Activated CD4-positive, alpha-beta T cell treated with anti-CD3 and anti-CD28 coated beads, Interleukin-2, amount 10 ng/mL, durations not matched to agents 7 days and 5 days (primary cell): ENCODE measurements at regions of chr10 and their contacts with region 1.

Region 1: DNA sequence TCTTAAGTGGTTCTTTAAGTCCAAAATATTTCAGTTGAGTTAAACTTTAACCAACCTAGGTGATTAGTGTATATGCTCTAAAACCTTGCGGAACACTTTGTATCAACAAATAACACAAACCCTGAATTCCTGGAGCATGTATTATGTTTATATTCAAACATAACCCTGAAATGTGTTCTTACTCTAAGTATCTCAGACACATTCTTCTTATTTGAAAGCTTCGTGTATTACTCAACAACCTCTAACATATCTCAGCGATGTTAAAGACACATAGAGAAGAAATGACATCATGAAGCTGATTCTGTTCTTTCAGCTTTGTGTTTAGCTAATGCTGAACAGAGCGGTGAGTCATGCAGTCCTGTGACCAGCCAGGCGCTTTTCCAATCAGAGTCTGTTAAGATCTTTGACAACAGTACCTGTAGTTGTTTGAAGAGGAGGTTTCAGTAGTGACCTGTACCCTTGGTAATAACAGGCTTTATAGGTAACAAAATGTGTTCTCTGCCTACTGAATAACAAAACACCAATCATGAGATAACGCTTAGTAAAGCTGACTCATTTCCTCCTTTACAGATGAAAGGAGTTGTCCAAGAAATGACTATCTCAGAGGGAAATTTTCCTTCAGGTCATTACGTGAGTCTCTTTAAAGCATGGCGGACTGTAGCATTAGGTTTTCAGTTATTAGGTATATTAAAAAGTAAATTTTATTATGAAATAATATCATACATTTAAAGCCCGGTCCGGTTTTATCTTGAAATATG is 67.3 kb upstream of the KLF6 start:
- DNase-seq: peak; percentile 62
- H3K4me3 Mint-ChIP-seq: no peak overlapping the region
- H3K27ac Mint-ChIP-seq: peak overlapping the region; percentile 48
- H3K4me1 Mint-ChIP-seq: peaks cover 33% of the 10 kb centered on the region
- H3K27me3 Mint-ChIP-seq: no peaks in the 10 kb centered on the region

Region 2: DNA sequence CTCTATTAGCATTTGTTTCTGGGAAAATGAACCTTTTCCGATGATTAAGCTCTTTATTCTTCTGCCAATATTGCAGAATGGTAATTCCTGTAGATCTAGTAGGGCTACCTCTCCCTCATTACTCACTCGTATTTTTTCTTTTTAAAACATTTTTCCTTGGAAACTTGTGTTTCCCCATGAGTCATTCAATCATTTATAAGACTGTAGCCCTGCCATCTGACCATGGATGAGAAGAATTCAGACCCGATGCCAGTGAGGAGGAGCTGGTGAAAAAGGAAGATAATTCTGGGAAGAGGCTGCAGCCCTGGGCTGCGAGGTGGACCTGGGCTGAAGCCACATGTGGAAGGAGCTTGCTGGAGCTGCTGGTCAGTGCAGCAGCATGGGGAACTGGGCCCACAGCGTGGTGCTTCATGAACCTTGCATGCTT is 310.1 kb before region 1 on chr10:
- CTCF ChIA-PET with region 1: no interaction called
- POLR2A ChIA-PET with region 1: no interaction called
- DNase-seq: no peak
- H3K4me3 Mint-ChIP-seq: no peak overlapping the region
- H3K27ac Mint-ChIP-seq: no peak overlapping the region
- H3K4me1 Mint-ChIP-seq: no peaks in the 10 kb centered on the region
- H3K27me3 Mint-ChIP-seq: no peaks in the 10 kb centered on the region

Region 3: GRCh38 chr10:3835770-3836169 is 16.6 kb before region 1 on chr10:
- CTCF ChIA-PET with region 1: interaction called, 12 read pairs
- POLR2A ChIA-PET with region 1: no interaction called
- DNase-seq: no peak
- H3K4me3 Mint-ChIP-seq: no peak overlapping the region
- H3K27ac Mint-ChIP-seq: no peak overlapping the region
- H3K4me1 Mint-ChIP-seq: peaks cover 44% of the 10 kb centered on the region
- H3K27me3 Mint-ChIP-seq: no peaks in the 10 kb centered on the region

Region 4: DNA sequence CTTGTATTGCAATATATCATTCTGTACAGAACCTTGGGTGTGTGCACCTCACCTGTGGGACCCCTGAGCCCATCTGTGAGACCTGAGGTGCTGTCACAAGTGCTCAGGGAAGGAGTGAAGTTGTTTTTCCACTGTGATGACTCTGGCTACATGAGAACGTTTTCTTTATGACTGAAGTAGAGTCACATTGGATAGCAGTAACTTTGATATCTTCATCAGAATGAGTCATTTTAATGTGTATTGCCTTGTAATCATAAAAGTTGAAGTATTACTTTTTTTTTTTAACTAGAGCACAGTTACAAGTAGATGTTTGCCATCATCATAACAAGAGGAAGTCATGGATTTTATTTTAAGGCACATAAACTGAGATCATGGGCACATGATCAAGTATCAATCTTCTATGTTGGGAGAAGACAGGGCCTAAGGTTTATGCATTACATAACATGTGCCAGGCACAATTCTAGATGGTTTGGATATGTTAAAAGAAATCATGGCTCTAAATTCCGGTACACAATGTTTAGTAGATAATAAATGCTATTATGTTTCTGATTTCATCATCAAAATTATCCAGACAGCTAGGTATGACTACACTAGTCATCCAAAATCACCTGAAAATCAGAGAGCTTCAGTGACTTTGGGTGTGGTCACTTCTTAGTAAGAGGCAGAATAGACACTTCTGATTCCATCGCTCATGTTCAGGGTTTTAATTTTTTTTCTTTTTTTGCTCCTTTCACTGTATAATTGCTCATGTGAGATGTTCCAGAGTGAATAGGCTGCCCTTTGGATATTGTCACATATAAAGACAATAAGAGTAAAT is 15.3 kb after region 1 on chr10:
- CTCF ChIA-PET with region 1: interaction called, 14 read pairs
- POLR2A ChIA-PET with region 1: interaction called, 3 read pairs
- DNase-seq: no peak
- H3K4me3 Mint-ChIP-seq: no peak overlapping the region
- H3K27ac Mint-ChIP-seq: peak overlapping the region; percentile 29
- H3K4me1 Mint-ChIP-seq: peaks cover 53% of the 10 kb centered on the region
- H3K27me3 Mint-ChIP-seq: no peaks in the 10 kb centered on the region

Region 5: GRCh38 chr10:4129865-4130477 is 277.6 kb after region 1 on chr10:
- CTCF ChIA-PET with region 1: no interaction called
- POLR2A ChIA-PET with region 1: interaction called, 13 read pairs
- DNase-seq: no peak
- H3K4me3 Mint-ChIP-seq: no peak overlapping the region
- H3K27ac Mint-ChIP-seq: no peak overlapping the region
- H3K4me1 Mint-ChIP-seq: peaks cover 29% of the 10 kb centered on the region
- H3K27me3 Mint-ChIP-seq: no peaks in the 10 kb centered on the region